CD4-positive, alpha-beta T cell (primary cell): ENCODE measurements at regions of chr13 and their contacts with region 1.

Region 1: DNA sequence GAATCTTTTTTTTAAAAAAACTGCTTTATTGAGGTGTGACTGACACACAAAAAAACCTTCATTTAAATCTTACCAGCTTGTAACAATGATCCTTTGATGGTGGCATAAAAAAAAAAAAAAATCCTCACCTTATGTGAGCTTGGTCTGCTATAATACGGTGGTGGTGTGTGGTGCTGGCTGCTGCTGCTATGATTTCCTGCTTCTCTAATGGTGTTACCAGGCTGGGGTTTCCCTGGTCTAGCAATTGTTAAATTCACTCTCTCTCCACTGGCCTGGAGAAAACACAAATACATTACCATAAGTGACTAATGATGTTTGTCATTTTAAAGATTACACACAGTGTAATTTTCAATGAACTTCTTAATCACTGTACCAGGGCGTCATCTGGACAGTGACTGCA is 60.6 kb downstream of the LNX2 start:
- DNase-seq: peak in 3 of 14 experiments; percentile 44 to 58 (median 49)
- ATAC-seq: peak; percentile 57
- H3K4me3 ChIP-seq: no peak overlapping the region
- H3K4me3 Mint-ChIP-seq: no peak overlapping the region
- H3K27ac ChIP-seq: no peak overlapping the region
- H3K27ac Mint-ChIP-seq: peak overlapping the region; percentile 66
- H3K4me1 ChIP-seq: no peaks in the 10 kb centered on the region
- H3K4me1 Mint-ChIP-seq: peaks cover 21% of the 10 kb centered on the region
- H3K27me3 ChIP-seq: no peaks in the 10 kb centered on the region
- H3K27me3 Mint-ChIP-seq: no peaks in the 10 kb centered on the region
- CTCF ChIP-seq: no peak

Region 2: DNA sequence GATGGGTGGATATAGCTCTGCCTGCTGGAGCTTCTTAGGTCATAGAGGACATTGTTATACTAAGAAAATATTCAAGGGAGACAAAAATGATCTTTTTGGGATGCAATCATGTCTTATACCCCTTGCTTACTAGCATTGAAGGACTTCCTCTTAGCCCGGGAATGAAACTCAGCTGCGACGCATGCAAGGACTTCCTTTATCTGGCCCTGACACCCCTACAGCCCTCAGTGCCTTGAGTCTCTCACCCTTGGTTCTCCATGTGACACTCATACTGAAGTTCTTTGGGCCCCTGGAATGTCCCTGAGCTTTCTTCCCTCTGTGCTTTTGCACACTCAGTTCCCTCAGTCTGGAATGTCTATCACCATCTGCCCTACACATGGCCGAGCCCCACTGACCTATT is 36.9 kb before region 1 on chr13:
- CTCF ChIA-PET with region 1: no interaction called
- POLR2A ChIA-PET with region 1: no interaction called
- intact Hi-C with region 1: no loop called
- DNase-seq: peak in 1 of 14 experiments; percentile 4
- ATAC-seq: no peak
- H3K4me3 ChIP-seq: no peak overlapping the region
- H3K4me3 Mint-ChIP-seq: no peak overlapping the region
- H3K27ac ChIP-seq: no peak overlapping the region
- H3K27ac Mint-ChIP-seq: no peak overlapping the region
- H3K4me1 ChIP-seq: no peaks in the 10 kb centered on the region
- H3K4me1 Mint-ChIP-seq: no peaks in the 10 kb centered on the region
- H3K27me3 ChIP-seq: peaks cover 0 to 8% of the 10 kb centered on the region in 2 experiments
- H3K27me3 Mint-ChIP-seq: peaks cover 8% of the 10 kb centered on the region
- CTCF ChIP-seq: no peak

Region 3: GRCh38 chr13:27810461-27810860 is 250.7 kb after region 1 on chr13:
- CTCF ChIA-PET with region 1: no interaction called
- POLR2A ChIA-PET with region 1: no interaction called
- intact Hi-C with region 1: loop called in 1 of 2 experiments (anchors 10 kb)
- DNase-seq: no peak
- ATAC-seq: no peak
- H3K4me3 ChIP-seq: no peak overlapping the region
- H3K4me3 Mint-ChIP-seq: no peak overlapping the region
- H3K27ac ChIP-seq: no peak overlapping the region
- H3K27ac Mint-ChIP-seq: no peak overlapping the region
- H3K4me1 ChIP-seq: no peaks in the 10 kb centered on the region
- H3K4me1 Mint-ChIP-seq: no peaks in the 10 kb centered on the region
- H3K27me3 ChIP-seq: peaks cover 12% of the 10 kb centered on the region in 2 experiments
- H3K27me3 Mint-ChIP-seq: peaks cover 84% of the 10 kb centered on the region
- CTCF ChIP-seq: no peak